ENCODE measurements at regions of chr15 and their contacts with region 1.

Region 1: GRCh38 chr15:25933456-25934158 is 70.5 kb upstream of the ATP10A start:
- DNase-seq: peak; percentile 70 to 84
- H3K4me3 ChIP-seq: no peak overlapping the region
- H3K4me3 Mint-ChIP-seq: peak overlapping the region; percentile 61
- H3K27ac Mint-ChIP-seq: peak overlapping the region; percentile 51
- H3K4me1 ChIP-seq: peaks cover 5% of the 10 kb centered on the region; the same call in 1 of the 2 replicates
- H3K4me1 Mint-ChIP-seq: peaks cover 11% of the 10 kb centered on the region
- H3K27me3 ChIP-seq: no peaks in the 10 kb centered on the region
- H3K27me3 Mint-ChIP-seq: peaks cover 3% of the 10 kb centered on the region
- CTCF ChIP-seq: peak; percentile 77 to 91

Region 2: GRCh38 chr15:25693321-25694237 is 240.0 kb before region 1 on chr15:
- CTCF ChIA-PET with region 1: interaction called, 5 read pairs
- POLR2A ChIA-PET with region 1: no interaction called
- intact Hi-C with region 1: loop called (anchors 5 kb)
- DNase-seq: peak; percentile 37 to 42
- H3K4me3 ChIP-seq: no peak overlapping the region
- H3K4me3 Mint-ChIP-seq: no peak overlapping the region
- H3K27ac Mint-ChIP-seq: no peak overlapping the region
- H3K4me1 ChIP-seq: no peaks in the 10 kb centered on the region
- H3K4me1 Mint-ChIP-seq: peaks cover 6% of the 10 kb centered on the region
- H3K27me3 ChIP-seq: no peaks in the 10 kb centered on the region
- H3K27me3 Mint-ChIP-seq: peaks cover 4% of the 10 kb centered on the region
- CTCF ChIP-seq: peak; percentile 31 to 42

Region 3: GRCh38 chr15:25739687-25740121 is 193.9 kb before region 1 on chr15:
- CTCF ChIA-PET with region 1: interaction called, 7 read pairs
- POLR2A ChIA-PET with region 1: no interaction called
- intact Hi-C with region 1: loop called (anchors 1 kb)
- DNase-seq: peak in 1 of 2 experiments; percentile 47
- H3K4me3 ChIP-seq: no peak overlapping the region
- H3K4me3 Mint-ChIP-seq: no peak overlapping the region
- H3K27ac Mint-ChIP-seq: no peak overlapping the region
- H3K4me1 ChIP-seq: no peaks in the 10 kb centered on the region
- H3K4me1 Mint-ChIP-seq: no peaks in the 10 kb centered on the region
- H3K27me3 ChIP-seq: no peaks in the 10 kb centered on the region
- H3K27me3 Mint-ChIP-seq: peaks cover 3% of the 10 kb centered on the region
- CTCF ChIP-seq: peak; percentile 13 to 30

Region 4: DNA sequence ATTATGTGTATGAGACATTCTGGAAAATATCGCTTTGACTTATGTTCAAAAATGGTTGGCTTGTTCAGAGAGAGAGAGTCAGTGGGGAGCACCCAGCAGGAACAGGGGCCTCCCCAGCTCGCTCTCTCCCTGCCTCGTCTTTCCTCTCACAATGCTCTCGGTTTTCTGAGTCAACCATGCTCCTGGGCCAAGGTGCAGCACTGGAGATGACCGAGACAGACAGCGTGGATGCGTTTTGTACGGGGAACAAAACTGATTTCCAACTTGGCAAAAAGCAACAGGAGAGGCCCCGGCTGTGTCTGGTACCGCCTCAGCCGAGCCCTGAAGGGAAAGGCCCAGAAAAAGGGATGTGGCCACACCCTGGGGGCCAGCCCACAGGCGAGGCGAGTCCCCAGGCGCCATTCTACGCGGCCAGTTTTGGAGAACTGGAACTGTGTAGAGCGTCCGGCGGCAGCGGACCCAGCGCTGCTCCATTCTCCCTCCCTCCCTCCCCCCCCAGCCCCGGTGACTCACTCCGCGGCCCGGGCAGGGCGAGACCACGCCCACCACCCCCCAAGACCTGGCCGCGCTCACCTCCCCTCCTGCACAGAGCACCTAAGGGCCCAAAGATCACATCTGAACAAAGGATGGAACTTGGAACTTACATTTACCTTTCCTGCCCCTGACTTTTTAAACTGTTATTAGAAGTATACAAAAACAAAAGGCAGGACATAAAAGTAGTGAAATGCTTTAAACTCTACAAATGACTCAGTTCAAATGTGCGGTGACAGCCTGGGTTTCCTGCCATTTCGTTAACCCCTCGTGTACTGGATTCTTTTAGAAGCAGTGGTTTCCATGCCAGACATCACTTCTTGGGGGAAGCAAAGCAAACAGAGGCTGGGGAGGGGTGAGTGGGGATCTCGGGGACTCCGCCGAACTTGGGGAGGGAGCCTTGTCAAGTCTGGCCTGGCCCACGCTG is 83.2 kb before region 1 on chr15:
- CTCF ChIA-PET with region 1: interaction called, 7 read pairs
- POLR2A ChIA-PET with region 1: interaction called, 4 read pairs
- intact Hi-C with region 1: loop called (anchors 2 kb)
- DNase-seq: peak; percentile 81 to 86
- H3K4me3 ChIP-seq: peak overlapping the region; percentile 42
- H3K4me3 Mint-ChIP-seq: peak overlapping the region; percentile 77
- H3K27ac Mint-ChIP-seq: peak overlapping the region; percentile 93
- H3K4me1 ChIP-seq: peaks cover 23% of the 10 kb centered on the region
- H3K4me1 Mint-ChIP-seq: peaks cover 28% of the 10 kb centered on the region
- H3K27me3 ChIP-seq: no peaks in the 10 kb centered on the region
- H3K27me3 Mint-ChIP-seq: no peaks in the 10 kb centered on the region
- CTCF ChIP-seq: no peak

Region 5: GRCh38 chr15:26298659-26299170 is 365.1 kb after region 1 on chr15:
- CTCF ChIA-PET with region 1: no interaction called
- POLR2A ChIA-PET with region 1: no interaction called
- intact Hi-C with region 1: no loop called
- DNase-seq: no peak
- H3K4me3 ChIP-seq: no peak overlapping the region
- H3K4me3 Mint-ChIP-seq: no peak overlapping the region
- H3K27ac Mint-ChIP-seq: no peak overlapping the region
- H3K4me1 ChIP-seq: no peaks in the 10 kb centered on the region
- H3K4me1 Mint-ChIP-seq: no peaks in the 10 kb centered on the region
- H3K27me3 ChIP-seq: no peaks in the 10 kb centered on the region
- H3K27me3 Mint-ChIP-seq: no peaks in the 10 kb centered on the region
- CTCF ChIP-seq: no peak

Measured in Caco-2 (cell line).